ENCODE measurements at regions of chr21 and their contacts with region 1.

Region 1: GRCh38 chr21:38755681-38756371 is 49.9 kb upstream of the ETS2 start:
- DNase-seq: peak; percentile 40 to 93
- H3K4me3 ChIP-seq: no peak overlapping the region
- H3K27ac ChIP-seq: peak overlapping the region; percentile 77 to 92
- H3K4me1 ChIP-seq: peaks cover 38 to 84% of the 10 kb centered on the region in 2 donors
- H3K27me3 ChIP-seq: no peaks in the 10 kb centered on the region
- CTCF ChIP-seq: no peak

Region 2: DNA sequence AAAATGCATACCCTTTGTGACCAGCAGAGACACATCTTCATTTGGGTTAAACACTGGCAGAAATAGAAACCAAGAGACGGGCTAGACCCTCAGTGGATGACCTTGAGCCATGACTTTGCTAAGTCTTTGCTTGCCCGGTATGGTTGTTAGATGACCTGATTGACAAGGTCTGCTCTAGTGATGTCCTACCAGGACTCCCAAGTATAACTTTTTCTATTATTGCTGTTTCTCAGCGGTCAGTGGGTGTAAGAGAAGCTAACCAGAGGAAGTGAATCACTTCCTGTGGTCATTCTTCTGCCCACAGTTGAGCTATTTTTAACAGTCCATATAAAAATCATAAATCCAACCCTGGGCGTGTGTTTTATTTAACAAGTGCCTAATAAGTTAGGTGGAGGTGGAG is 76.3 kb before region 1 on chr21:
- intact Hi-C with region 1: no loop called
- DNase-seq: no peak
- H3K4me3 ChIP-seq: no peak overlapping the region
- H3K27ac ChIP-seq: peak overlapping the region; percentile 78 to 88
- H3K4me1 ChIP-seq: peaks cover 15 to 22% of the 10 kb centered on the region in 2 donors
- H3K27me3 ChIP-seq: no peaks in the 10 kb centered on the region
- CTCF ChIP-seq: no peak

Region 3: DNA sequence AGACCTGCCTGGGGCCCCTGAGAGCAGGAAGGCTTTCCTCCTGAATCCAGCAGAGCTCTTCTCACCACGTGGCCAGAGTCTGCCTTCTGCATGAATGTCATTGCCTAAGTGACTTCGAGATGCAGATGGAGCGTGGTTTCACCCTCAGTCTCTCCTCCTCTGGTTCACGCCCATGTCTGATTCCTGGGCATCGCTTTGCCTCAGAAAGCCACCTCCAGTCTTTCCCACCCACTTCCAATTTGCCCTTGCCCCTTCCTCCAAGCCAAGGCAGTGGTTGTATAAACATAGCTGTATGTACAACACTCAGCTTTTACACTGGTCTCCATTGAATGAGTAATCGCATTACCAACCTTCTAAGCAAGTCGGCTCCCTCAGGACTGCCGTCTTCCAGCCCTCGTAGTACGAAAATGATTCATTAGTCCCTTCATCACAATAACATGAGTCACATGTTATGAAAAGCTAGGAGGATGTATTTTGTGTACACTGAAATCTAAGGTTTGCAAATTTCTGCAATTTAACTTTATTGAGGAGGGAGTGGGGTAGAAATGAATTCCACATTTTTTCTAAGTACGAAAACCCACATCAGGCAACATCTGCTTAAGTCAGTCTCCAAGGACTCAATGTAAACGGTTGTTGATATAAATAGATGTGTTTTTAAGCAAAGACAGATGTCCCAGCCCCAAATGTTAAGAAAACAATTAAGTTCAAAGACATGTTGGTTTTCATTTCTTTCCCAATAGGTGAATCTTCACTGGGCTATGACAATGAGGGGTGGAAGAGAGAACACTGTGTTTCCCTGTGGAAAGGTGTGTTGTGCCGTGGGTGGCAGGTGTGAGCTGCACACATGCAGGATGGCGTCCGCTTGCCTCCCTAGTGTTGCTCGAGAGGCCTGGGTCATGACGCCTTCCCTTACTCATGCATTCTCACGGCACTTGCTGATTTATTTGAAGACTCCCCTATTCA is 17.6 kb after region 1 on chr21:
- intact Hi-C with region 1: loop called (anchors 2 kb)
- DNase-seq: peak; percentile 43 to 92
- H3K4me3 ChIP-seq: no peak overlapping the region
- H3K27ac ChIP-seq: peak overlapping the region; percentile 37 to 75
- H3K4me1 ChIP-seq: peaks cover 4 to 18% of the 10 kb centered on the region in 2 donors
- H3K27me3 ChIP-seq: no peaks in the 10 kb centered on the region
- CTCF ChIP-seq: no peak

Region 4: DNA sequence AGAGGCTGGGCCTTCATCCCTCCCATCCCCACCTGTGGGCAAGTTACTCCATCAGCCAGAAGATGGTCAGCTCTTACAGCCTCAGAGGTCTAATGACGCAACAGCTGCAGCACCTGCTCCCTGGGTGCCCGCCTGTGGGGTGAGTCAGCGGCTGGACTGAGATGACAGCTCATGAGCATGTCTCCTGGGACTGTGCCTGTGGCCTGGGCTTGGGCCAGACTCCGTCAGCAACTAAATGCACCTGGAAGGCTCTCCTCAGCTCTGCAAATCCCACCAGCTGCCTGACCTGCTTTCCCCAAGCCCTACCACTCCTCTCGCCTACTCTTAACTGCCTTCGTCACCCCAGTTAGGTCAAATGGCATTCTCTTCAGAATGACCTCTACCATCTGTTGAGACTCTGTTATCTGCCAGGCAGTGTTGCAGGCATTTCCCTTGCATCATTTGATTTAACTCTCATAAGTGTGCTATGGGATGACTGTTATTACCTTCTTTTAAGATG is 97.6 kb after region 1 on chr21:
- intact Hi-C with region 1: no loop called
- DNase-seq: no peak
- H3K4me3 ChIP-seq: no peak overlapping the region
- H3K27ac ChIP-seq: no peak overlapping the region
- H3K4me1 ChIP-seq: no peaks in the 10 kb centered on the region
- H3K27me3 ChIP-seq: no peaks in the 10 kb centered on the region
- CTCF ChIP-seq: no peak

Region 5: DNA sequence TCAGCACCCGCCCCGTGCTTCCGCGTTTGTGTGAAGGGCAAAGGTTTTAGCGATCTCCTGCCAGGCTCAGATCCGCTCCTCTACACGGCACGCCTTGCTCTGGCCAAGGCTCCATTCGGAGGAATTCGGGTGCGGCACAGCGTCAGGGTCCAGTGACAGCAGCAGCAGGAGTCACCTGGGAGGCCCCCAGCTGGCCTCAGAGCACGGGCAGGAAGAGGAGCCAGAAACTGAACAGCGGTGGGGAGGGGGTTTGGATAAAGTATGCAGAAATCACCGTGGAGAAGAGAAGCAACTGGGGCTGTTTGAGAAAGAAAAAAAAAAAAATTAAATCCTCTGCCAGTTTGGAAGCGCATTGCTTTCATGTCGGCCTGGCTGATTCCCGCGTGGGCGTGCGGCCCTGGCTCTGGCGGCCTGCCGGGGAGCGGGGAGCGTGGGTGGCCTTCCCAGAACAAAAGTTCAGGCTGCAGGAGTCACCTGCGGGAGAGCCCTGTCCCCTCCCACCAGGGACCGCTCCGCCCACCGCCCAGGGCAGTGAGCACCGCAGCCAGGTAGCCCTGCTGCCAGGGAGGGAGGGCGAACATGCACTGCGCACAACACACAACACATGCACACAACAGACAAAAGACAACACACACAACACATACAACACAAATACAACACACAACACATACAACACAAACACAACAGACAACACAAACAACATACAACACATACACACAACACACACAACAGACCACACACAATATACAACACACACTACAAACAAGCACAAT is 157.5 kb after region 1 on chr21:
- intact Hi-C with region 1: loop called (anchors 5 kb)
- DNase-seq: peak in 1 of 2 donors; percentile 88
- H3K4me3 ChIP-seq: peak overlapping the region; percentile 16 to 45
- H3K27ac ChIP-seq: peak overlapping the region; percentile 79 to 90
- H3K4me1 ChIP-seq: peaks cover 3 to 19% of the 10 kb centered on the region in 2 donors
- H3K27me3 ChIP-seq: no peaks in the 10 kb centered on the region
- CTCF ChIP-seq: no peak

Region 6: DNA sequence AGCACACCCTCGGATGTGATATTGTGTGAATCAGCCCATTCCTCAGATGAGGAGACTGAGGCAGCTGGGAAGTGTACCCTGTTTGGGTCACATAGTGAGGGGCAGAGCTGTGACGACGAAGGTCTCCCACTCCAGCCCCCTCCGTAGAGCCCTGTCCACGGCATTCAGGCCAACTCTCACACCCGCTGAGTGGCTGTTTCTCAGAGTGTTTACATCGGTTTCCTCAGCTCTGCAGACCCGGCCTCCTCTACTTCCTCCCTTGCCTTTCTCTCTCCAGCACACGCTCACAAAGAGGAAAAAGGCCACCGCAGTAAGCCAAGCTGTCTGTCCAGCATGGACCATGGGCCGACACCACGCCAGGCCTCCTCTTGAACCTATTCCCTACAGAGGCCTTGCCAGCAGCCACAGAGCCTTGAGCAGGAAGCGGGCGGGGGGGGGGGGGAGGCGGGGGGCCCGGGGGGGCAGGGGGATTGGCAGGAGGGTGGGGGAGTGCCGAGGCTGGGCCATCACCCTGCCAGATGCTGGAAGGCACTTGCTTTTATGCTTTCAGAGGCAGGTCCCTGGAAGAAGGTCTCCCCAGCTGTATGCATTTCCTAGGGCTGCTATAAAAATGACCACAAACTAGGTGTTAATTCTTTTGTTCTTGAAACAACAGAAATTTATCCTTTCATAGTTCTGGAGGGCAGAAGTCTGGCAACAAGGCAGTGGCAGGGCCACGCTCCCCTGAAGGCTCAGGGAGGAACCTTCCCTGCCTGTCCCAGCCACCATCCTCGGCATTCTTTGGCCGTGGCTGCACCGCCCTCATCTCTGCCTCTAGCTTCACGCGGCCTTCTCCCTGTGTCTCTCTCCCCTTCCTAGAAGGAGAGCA is 249.0 kb after region 1 on chr21:
- intact Hi-C with region 1: loop called (anchors 5 kb)
- DNase-seq: peak; percentile 58 to 81
- H3K4me3 ChIP-seq: no peak overlapping the region
- H3K27ac ChIP-seq: peak overlapping the region; percentile 90 to 95
- H3K4me1 ChIP-seq: peaks cover 14 to 36% of the 10 kb centered on the region in 2 donors
- H3K27me3 ChIP-seq: no peaks in the 10 kb centered on the region
- CTCF ChIP-seq: peak in 1 of 3 experiments; percentile 15